BJ (cell line): ENCODE measurements at regions of chr9 and their contacts with region 1.

Region 1: DNA sequence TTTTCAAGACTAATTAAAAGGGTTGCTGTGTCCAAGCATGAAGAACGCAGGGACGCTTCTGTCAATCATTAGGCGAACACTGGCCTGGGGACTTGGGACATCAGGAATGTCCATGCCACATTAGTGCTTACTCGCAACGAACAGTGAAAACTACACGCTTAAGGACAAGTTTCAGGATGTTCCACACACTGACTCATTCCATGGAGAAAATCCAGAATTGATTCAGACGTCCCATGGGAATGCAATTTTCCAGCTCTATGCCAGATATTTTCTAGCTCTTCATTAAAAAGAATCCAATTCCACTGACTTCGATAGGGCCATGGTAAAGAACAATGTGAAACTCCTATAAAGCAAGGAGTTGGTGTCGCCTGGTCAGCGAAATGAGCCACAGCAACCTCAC is 98.2 kb downstream of the CAMSAP1 start:
- DNase-seq: no peak
- H3K4me3 ChIP-seq: no peak overlapping the region
- H3K27me3 ChIP-seq: no peaks in the 10 kb centered on the region
- CTCF ChIP-seq: no peak

Region 2: GRCh38 chr9:135797507-135798262 is 11.5 kb before region 1 on chr9:
- CTCF ChIA-PET with region 1: interaction called, 15 read pairs
- POLR2A ChIA-PET with region 1: no interaction called
- DNase-seq: no peak
- H3K4me3 ChIP-seq: no peak overlapping the region
- H3K27me3 ChIP-seq: no peaks in the 10 kb centered on the region; the same call in 1 of the 2 replicates
- CTCF ChIP-seq: peak; percentile 88